Lower lobe of right lung (tissue), 2 donors: ENCODE measurements at regions of chr2 and their contacts with region 1.

Region 1: GRCh38 chr2:175690113-175690837 is 311.8 kb downstream of the LNPK start:
- DNase-seq: no peak
- ATAC-seq: peak in 1 of 2 donors; percentile 60
- H3K4me3 ChIP-seq: no peak overlapping the region
- H3K27ac ChIP-seq: no peak overlapping the region
- H3K4me1 ChIP-seq: no peaks in the 10 kb centered on the region
- H3K27me3 ChIP-seq: peaks cover 5% of the 10 kb centered on the region
- CTCF ChIP-seq: peak; percentile 67

Region 2: GRCh38 chr2:175227393-175227792 is 462.9 kb before region 1 on chr2:
- intact Hi-C with region 1: no loop called
- DNase-seq: no peak
- ATAC-seq: no peak
- H3K4me3 ChIP-seq: no peak overlapping the region
- H3K27ac ChIP-seq: no peak overlapping the region
- H3K4me1 ChIP-seq: no peaks in the 10 kb centered on the region
- H3K27me3 ChIP-seq: peaks cover 14% of the 10 kb centered on the region
- CTCF ChIP-seq: no peak

Region 3: DNA sequence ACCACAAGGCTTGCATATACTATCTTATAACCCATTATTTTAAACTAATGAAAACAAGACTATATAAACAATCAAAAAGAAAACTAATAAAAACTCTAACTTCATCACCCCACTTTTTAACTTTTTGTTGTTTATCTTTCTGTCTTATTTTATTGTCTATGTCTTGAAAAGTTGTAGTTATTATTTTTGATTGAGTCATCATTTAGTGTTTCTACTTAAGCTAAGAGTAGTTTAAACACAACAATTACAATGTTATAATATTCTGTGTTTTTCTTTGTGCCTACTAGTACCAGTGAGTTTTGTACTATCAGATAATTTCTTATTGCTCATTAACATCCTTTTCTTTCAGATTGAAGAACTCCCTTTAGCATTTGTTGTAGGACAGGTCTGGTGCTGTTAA is 190.0 kb before region 1 on chr2:
- intact Hi-C with region 1: no loop called
- DNase-seq: no peak
- ATAC-seq: no peak
- H3K4me3 ChIP-seq: no peak overlapping the region
- H3K27ac ChIP-seq: no peak overlapping the region
- H3K4me1 ChIP-seq: no peaks in the 10 kb centered on the region
- H3K27me3 ChIP-seq: no peaks in the 10 kb centered on the region
- CTCF ChIP-seq: no peak

Region 4: DNA sequence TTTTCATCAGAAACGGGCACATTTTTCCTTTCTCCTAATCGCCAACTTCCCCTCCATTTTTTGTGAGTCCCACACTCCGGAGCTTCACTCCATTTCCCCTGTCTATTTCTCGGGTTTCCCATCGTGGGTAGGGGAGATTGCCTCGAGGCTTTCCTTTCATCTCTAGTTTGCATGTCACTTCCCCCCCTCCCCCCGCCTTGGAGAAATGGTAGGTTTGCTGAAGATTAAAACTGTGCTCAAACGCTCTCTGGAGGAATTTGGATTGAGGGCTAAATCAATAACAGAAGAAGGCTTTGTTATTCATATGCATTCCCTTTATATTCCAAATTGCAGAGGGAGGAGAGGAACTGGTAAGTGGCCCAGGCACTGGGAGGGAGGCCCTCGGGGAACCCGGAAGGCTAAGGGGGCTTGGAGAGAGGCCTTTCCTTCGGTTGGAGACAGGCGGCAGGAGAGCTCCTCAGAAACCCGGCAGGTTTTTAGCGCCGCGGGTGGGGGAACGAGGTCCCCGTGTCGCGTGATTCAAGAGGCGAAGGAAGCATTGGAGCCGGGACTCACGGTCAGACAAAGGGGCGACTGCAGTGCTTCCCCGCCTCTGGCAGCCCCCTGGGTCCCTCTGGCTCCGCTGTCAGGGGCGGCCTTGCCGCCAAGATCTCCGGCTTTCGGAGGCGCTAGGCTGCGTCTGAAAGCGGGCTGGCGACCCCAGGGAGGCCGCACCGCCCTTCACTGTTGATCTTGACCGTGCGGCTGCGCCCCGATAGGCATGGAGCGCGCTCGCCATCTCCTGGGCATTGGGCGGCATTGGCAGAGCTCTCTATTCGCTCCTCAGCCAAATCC is 406.9 kb after region 1 on chr2:
- intact Hi-C with region 1: loop called (anchors 10 kb)
- DNase-seq: peak; percentile 71
- ATAC-seq: peak; percentile 86 to 95
- H3K4me3 ChIP-seq: peak overlapping the region; percentile 54
- H3K27ac ChIP-seq: no peak overlapping the region
- H3K4me1 ChIP-seq: peaks cover 26% of the 10 kb centered on the region
- H3K27me3 ChIP-seq: peaks cover 98% of the 10 kb centered on the region
- CTCF ChIP-seq: peak; percentile 86